Sigmoid colon (tissue), 7 donors: ENCODE measurements at regions of chr2 and their contacts with region 1.

Region 1: DNA sequence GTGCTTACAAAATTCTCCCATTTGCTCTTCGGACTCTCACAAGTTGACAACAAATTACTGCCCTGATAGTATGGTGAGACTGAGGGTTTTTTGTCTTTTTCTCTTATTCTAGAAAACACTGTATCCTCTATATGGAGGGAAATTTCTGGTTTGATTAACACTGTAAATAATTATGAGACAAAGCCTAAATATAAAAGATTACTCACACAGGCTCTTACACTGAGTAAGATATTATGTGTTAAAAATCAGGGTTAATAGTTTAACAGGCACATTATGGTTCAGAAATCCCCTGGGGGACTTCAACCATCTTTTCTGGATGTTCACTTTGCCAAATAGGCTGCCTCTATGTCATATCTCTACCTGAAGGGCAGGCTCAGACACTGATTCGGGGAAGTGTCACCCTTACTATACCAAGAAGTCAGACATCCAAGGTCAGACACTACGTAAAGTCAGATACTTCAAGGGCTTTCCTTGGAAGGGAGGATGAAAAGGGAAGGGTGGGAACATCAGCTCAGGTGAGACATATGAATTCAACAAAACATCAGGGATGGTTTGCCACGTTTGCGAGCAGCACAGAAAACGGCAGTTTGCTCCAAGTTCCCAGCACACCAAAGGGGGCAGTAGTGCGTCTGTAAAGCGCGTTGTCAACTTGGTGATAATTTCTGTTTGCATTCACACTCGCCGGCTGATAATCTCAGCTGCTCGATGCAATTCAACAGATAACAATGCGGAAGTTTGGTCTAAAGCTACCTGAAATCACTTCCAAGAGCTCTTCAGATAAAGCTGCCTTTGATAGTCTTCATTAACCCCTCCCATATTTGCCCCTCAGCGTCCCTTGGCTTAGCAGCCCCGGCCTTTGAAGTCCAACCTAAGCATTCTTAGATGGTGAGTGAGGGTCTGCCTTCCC is 972 bp upstream of the RASGRP3 start:
- DNase-seq: peak; percentile 78
- H3K4me3 ChIP-seq: peak overlapping the region; percentile 46 to 70 (median 62)
- H3K27ac ChIP-seq: peak overlapping the region; percentile 80 to 88 (median 86)
- H3K4me1 ChIP-seq: peaks cover 0 to 7% (median 3%) of the 10 kb centered on the region in 4 donors
- H3K27me3 ChIP-seq: no peaks in the 10 kb centered on the region
- CTCF ChIP-seq: peak; percentile 57 to 79 (median 68)
- EP300 ChIP-seq: no peak
- POLR2A ChIP-seq: no peak

Region 2: GRCh38 chr2:33583194-33583938 is 107.9 kb after region 1 on chr2:
- intact Hi-C with region 1: loop called (anchors 5 kb)
- DNase-seq: no peak
- H3K4me3 ChIP-seq: no peak overlapping the region
- H3K27ac ChIP-seq: peak overlapping the region in 1 of 4 donors; percentile 18
- H3K4me1 ChIP-seq: peaks cover 0 to 22% (median 10%) of the 10 kb centered on the region in 4 donors
- H3K27me3 ChIP-seq: no peaks in the 10 kb centered on the region
- CTCF ChIP-seq: peak; percentile 39 to 73 (median 62)
- EP300 ChIP-seq: no peak
- POLR2A ChIP-seq: no peak